Endothelial cell of umbilical vein (primary cell): ENCODE measurements at regions of chr9 and their contacts with region 1.

Region 1: GRCh38 chr9:133700819-133701321 is 37.3 kb downstream of the SARDH start:
- DNase-seq: no peak
- H3K4me3 ChIP-seq: no peak overlapping the region
- H3K27ac ChIP-seq: no peak overlapping the region
- H3K4me1 ChIP-seq: no peaks in the 10 kb centered on the region
- H3K27me3 ChIP-seq: peaks cover 2 to 12% of the 10 kb centered on the region in 2 experiments
- CTCF ChIP-seq: no peak
- POLR2A ChIP-seq: no peak

Region 2: GRCh38 chr9:133437753-133438531 is 262.9 kb before region 1 on chr9:
- CTCF ChIA-PET with region 1: no interaction called
- POLR2A ChIA-PET with region 1: no interaction called
- dilution Hi-C with region 1: no loop called
- intact Hi-C with region 1: no loop called
- DNase-seq: no peak
- H3K4me3 ChIP-seq: no peak overlapping the region
- H3K27ac ChIP-seq: no peak overlapping the region
- H3K4me1 ChIP-seq: no peaks in the 10 kb centered on the region
- H3K27me3 ChIP-seq: no peaks in the 10 kb centered on the region
- CTCF ChIP-seq: no peak
- POLR2A ChIP-seq: no peak

Region 3: DNA sequence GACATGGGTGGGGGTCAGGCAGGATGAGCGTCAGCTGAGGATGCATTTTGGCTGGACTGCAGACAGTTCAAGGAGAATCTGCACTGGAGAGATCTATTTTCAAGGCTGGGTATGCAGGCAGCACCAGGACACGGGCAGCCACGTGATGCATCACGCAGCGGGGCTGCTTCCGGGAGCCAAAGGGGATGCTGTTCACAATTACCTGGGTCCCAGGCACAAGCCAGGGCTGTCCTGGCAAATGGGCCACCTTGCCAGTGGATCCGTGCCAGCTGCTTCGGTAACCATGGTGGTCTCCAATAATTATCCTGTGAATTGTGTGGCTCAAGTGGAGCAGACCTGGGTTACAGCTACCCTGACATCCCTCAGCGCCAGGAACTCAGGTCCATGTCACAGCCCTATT is 47.2 kb before region 1 on chr9:
- CTCF ChIA-PET with region 1: no interaction called
- POLR2A ChIA-PET with region 1: no interaction called
- dilution Hi-C with region 1: no loop called
- intact Hi-C with region 1: loop called (anchors 1 kb)
- DNase-seq: no peak
- H3K4me3 ChIP-seq: no peak overlapping the region
- H3K27ac ChIP-seq: no peak overlapping the region
- H3K4me1 ChIP-seq: no peaks in the 10 kb centered on the region
- H3K27me3 ChIP-seq: peaks cover 0 to 8% of the 10 kb centered on the region in 2 experiments
- CTCF ChIP-seq: no peak
- POLR2A ChIP-seq: no peak

Region 4: GRCh38 chr9:133664173-133665051 is 36.5 kb before region 1 on chr9:
- CTCF ChIA-PET with region 1: no interaction called
- POLR2A ChIA-PET with region 1: no interaction called
- dilution Hi-C with region 1: no loop called
- intact Hi-C with region 1: no loop called
- DNase-seq: no peak
- H3K4me3 ChIP-seq: no peak overlapping the region
- H3K27ac ChIP-seq: no peak overlapping the region
- H3K4me1 ChIP-seq: no peaks in the 10 kb centered on the region
- H3K27me3 ChIP-seq: peaks cover 2% of the 10 kb centered on the region in 2 experiments
- CTCF ChIP-seq: no peak
- POLR2A ChIP-seq: no peak

Region 5: GRCh38 chr9:133835255-133835901 is 134.5 kb after region 1 on chr9:
- CTCF ChIA-PET with region 1: no interaction called
- POLR2A ChIA-PET with region 1: no interaction called
- dilution Hi-C with region 1: no loop called
- intact Hi-C with region 1: no loop called
- DNase-seq: no peak
- H3K4me3 ChIP-seq: no peak overlapping the region
- H3K27ac ChIP-seq: no peak overlapping the region
- H3K4me1 ChIP-seq: no peaks in the 10 kb centered on the region
- H3K27me3 ChIP-seq: no peaks in the 10 kb centered on the region
- CTCF ChIP-seq: no peak
- POLR2A ChIP-seq: no peak